AG04449 (cell line): ENCODE measurements at regions of chr14 and their contacts with region 1.

Region 1: GRCh38 chr14:100108042-100108825 is 43.0 kb downstream of the EVL start:
- DNase-seq: no peak
- H3K4me3 ChIP-seq: no peak overlapping the region
- CTCF ChIP-seq: peak; percentile 91

Region 2: GRCh38 chr14:99990268-99991170 is 117.7 kb before region 1 on chr14:
- CTCF ChIA-PET with region 1: interaction called, 286 read pairs
- POLR2A ChIA-PET with region 1: no interaction called
- DNase-seq: no peak
- H3K4me3 ChIP-seq: no peak overlapping the region
- CTCF ChIP-seq: no peak

Region 3: GRCh38 chr14:100012402-100013327 is 95.6 kb before region 1 on chr14:
- CTCF ChIA-PET with region 1: interaction called, 10 read pairs
- POLR2A ChIA-PET with region 1: no interaction called
- DNase-seq: no peak
- H3K4me3 ChIP-seq: no peak overlapping the region
- CTCF ChIP-seq: no peak

Region 4: DNA sequence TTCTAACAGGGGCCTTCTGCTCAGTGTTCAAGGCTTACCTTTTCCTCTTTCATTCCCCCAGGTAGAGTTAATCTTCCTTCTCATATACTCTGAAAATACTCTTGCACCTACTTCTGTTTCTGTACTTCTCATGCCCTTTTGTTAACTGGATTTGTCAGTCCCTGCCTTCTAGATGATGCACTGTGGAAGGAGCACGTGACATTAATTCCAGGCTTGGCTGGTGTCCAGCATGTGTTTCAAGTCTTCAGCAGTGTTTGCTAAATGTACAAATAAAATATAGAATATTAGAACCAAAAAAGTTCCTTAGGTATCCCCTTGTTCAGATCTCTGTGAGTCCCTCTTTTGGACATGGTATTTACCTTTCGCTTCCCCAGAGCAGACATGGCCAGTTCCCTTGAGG is 70.9 kb before region 1 on chr14:
- CTCF ChIA-PET with region 1: interaction called, 20 read pairs
- POLR2A ChIA-PET with region 1: no interaction called
- DNase-seq: no peak
- H3K4me3 ChIP-seq: no peak overlapping the region
- CTCF ChIP-seq: no peak

Region 5: DNA sequence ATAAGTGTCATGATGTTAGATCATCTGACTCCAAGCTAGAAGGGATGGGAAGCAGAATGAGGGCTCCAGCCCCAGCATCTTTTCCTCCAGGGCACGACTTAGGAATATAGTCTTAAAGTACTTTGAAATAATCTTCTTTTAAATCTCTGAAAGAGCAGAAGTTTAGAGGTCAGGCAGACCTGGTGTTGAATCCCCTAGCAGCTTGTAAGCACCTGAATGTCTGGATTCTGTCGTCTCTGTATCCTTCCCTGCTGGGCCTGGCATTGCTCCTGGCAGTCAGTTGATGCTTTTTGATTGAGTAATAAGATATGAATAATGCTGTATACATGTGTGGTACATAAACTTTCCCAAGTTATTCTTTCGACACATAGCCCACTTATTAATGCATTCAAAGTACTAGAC is 11.7 kb before region 1 on chr14:
- CTCF ChIA-PET with region 1: interaction called, 54 read pairs
- POLR2A ChIA-PET with region 1: no interaction called
- DNase-seq: peak; percentile 45
- H3K4me3 ChIP-seq: no peak overlapping the region
- CTCF ChIP-seq: no peak

Region 6: GRCh38 chr14:100155042-100155846 is 47.0 kb after region 1 on chr14:
- CTCF ChIA-PET with region 1: interaction called, 15 read pairs
- POLR2A ChIA-PET with region 1: no interaction called
- DNase-seq: no peak
- H3K4me3 ChIP-seq: no peak overlapping the region
- CTCF ChIP-seq: peak; percentile 47